H1 (cell line): ENCODE measurements at regions of chr9 and their contacts with region 1.

Region 1: DNA sequence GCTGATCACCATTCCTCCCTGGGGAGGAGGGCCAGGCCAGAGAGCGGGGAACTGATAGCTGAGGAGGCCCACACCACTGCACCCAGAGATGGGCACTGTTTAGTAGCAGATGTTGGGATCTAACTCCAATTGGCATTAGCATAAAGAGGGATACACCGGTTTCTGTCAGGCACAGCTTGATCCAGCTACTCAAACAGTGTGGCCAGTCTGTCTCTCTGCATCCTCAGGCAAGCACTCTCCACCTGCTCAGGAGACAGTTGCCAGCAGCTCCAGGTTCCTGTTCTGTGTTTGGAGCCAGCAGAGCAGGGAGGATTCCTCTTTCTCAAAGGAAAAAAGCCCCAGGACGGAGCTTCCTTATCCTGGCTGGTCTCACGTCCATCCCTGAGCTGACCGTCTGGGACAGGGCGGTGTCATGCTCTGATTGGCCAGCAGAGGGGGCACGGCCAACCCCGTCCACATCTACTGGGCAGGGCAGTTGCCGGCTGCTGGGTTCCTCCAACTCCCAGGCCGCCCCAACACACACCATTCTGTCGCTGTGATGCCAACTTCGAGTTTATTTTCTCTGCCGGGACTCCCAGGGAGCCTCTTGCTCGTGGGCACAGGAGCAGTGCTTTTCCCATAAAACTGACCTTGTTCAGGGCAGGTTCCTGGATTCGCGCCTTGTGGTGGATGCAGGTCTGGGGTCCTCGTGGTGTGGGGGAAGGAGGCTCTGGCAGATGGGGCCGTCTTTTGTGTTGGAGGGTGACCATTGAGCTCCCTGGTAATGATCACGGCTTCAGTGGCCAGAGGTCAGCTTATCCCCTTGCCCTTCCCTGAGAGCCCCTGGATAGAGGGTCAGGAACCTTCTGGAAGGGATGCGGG is 47.9 kb downstream of the COL5A1 start:
- DNase-seq: peak; percentile 21 to 90
- H3K4me3 ChIP-seq: no peak overlapping the region
- H3K27ac ChIP-seq: no peak overlapping the region
- H3K4me1 ChIP-seq: no peaks in the 10 kb centered on the region
- H3K27me3 ChIP-seq: no peaks in the 10 kb centered on the region
- CTCF ChIP-seq: peak in 2 of 3 experiments; percentile 73 to 88; a peak in 3 of 4 replicates
- EP300 ChIP-seq: no peak
- POLR2A ChIP-seq: no peak
- RAD21 ChIP-seq: peak; percentile 48 to 58

Region 2: DNA sequence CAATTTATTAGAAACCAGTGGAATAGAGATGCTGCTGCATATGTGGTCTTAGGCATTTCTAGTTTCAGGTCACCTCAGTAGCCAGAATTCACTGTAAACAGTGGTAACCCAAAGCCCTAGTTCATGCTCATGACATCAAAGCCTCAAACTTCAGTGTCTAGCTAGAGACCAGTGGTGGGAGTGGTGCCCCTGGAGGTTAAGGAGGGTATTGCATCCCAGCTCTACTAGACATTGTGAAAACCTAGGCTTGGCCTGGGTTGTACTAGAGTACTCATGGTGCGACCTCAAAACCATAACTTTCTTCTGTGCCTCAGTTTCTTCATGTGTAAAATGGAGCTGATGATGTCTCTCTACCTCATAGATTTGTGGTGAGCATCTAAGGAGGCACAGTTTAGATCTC is 29.1 kb before region 1 on chr9:
- CTCF ChIA-PET with region 1: interaction called, 13 read pairs
- POLR2A ChIA-PET with region 1: no interaction called
- DNase-seq: peak in 1 of 2 experiments; percentile 56
- H3K4me3 ChIP-seq: no peak overlapping the region
- H3K27ac ChIP-seq: no peak overlapping the region
- H3K4me1 ChIP-seq: peaks cover 0 to 10% (median 7%) of the 10 kb centered on the region in 4 experiments; a peak in 5 of 7 replicates
- H3K27me3 ChIP-seq: no peaks in the 10 kb centered on the region
- CTCF ChIP-seq: peak; percentile 34 to 70 (median 43)
- EP300 ChIP-seq: no peak
- POLR2A ChIP-seq: no peak
- RAD21 ChIP-seq: no peak; a peak in 1 of 4 replicates

Region 3: GRCh38 chr9:134670042-134670525 is 19.5 kb before region 1 on chr9:
- CTCF ChIA-PET with region 1: interaction called, 27 read pairs
- POLR2A ChIA-PET with region 1: no interaction called
- DNase-seq: no peak
- H3K4me3 ChIP-seq: no peak overlapping the region
- H3K27ac ChIP-seq: no peak overlapping the region
- H3K4me1 ChIP-seq: no peaks in the 10 kb centered on the region; a peak in 1 of 7 replicates
- H3K27me3 ChIP-seq: no peaks in the 10 kb centered on the region
- CTCF ChIP-seq: no peak
- EP300 ChIP-seq: no peak
- POLR2A ChIP-seq: no peak
- RAD21 ChIP-seq: no peak

Region 4: GRCh38 chr9:134707031-134707680 is 17.6 kb after region 1 on chr9:
- CTCF ChIA-PET with region 1: interaction called, 10 read pairs
- POLR2A ChIA-PET with region 1: no interaction called
- DNase-seq: no peak
- H3K4me3 ChIP-seq: no peak overlapping the region
- H3K27ac ChIP-seq: no peak overlapping the region
- H3K4me1 ChIP-seq: no peaks in the 10 kb centered on the region
- H3K27me3 ChIP-seq: no peaks in the 10 kb centered on the region
- CTCF ChIP-seq: no peak
- EP300 ChIP-seq: no peak
- POLR2A ChIP-seq: no peak
- RAD21 ChIP-seq: no peak

Region 5: GRCh38 chr9:134738869-134739659 is 49.5 kb after region 1 on chr9:
- CTCF ChIA-PET with region 1: interaction called, 29 read pairs
- POLR2A ChIA-PET with region 1: no interaction called
- DNase-seq: peak; percentile 21 to 93
- H3K4me3 ChIP-seq: no peak overlapping the region
- H3K27ac ChIP-seq: no peak overlapping the region
- H3K4me1 ChIP-seq: peaks cover 0 to 7% (median 1%) of the 10 kb centered on the region in 4 experiments; a peak in 3 of 7 replicates
- H3K27me3 ChIP-seq: no peaks in the 10 kb centered on the region
- CTCF ChIP-seq: peak in 2 of 3 experiments; percentile 77 to 89; a peak in 3 of 4 replicates
- EP300 ChIP-seq: no peak
- POLR2A ChIP-seq: no peak
- RAD21 ChIP-seq: peak; percentile 78 to 83